ENCODE measurements at regions of chr17 and their contacts with region 1.

Region 1: GRCh38 chr17:44044067-44044466 is 22.4 kb downstream of the LSM12 start:
- DNase-seq: no peak
- ATAC-seq: no peak
- H3K4me3 Mint-ChIP-seq: no peak overlapping the region
- H3K27ac Mint-ChIP-seq: no peak overlapping the region
- H3K4me1 Mint-ChIP-seq: peaks cover 6% of the 10 kb centered on the region
- H3K27me3 Mint-ChIP-seq: no peaks in the 10 kb centered on the region
- CTCF ChIP-seq: no peak

Region 2: DNA sequence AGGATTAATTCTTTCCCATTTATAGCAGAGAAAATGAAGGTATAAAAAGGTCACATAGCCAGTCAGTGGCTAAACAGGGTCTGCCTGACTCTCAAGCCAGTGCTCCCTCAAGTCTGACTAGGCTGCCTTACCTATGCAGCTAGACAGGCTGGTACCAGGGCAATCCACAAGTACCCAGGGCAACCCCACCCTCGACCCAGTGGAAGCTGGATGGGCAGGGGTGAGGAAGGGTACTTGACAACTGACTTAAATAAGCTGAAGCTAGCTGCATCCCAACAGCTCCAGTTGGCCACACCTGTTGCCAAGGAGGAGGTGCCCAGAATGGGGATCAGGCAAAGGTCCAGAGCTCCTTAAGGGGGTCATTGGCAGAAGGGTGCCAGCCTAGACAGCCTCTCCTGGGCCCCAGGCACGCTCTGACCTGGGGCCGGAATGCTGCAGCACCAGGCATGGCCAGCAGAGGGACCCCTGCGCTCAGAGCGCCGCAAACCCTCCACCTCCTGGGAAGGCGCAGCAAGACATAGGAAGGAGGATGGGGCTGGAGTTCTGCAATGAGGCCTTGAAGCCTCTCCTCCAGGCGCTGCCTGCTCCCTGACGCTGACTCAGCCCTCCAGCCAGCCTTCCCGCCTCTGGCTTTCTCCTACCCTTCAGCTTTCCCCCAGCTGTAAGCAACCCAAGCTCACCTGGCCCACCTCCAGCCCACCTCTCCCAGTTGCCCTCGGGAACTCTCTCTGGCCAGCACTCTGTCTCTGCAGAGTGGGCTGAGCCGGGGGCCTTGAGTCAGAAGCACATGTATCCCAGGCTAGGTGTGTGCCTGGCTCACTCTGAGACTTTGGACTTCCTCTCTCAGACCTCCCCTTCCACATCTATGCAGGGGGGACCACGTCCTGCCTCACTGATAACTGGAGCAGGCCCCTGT is 165.5 kb before region 1 on chr17:
- CTCF ChIA-PET with region 1: interaction called, 3 read pairs
- POLR2A ChIA-PET with region 1: no interaction called
- intact Hi-C with region 1: loop called (anchors 2 kb)
- DNase-seq: peak; percentile 73
- ATAC-seq: peak; percentile 95
- H3K4me3 Mint-ChIP-seq: no peak overlapping the region
- H3K27ac Mint-ChIP-seq: no peak overlapping the region
- H3K4me1 Mint-ChIP-seq: no peaks in the 10 kb centered on the region
- H3K27me3 Mint-ChIP-seq: peaks cover 28% of the 10 kb centered on the region
- CTCF ChIP-seq: peak; percentile 70

Region 3: DNA sequence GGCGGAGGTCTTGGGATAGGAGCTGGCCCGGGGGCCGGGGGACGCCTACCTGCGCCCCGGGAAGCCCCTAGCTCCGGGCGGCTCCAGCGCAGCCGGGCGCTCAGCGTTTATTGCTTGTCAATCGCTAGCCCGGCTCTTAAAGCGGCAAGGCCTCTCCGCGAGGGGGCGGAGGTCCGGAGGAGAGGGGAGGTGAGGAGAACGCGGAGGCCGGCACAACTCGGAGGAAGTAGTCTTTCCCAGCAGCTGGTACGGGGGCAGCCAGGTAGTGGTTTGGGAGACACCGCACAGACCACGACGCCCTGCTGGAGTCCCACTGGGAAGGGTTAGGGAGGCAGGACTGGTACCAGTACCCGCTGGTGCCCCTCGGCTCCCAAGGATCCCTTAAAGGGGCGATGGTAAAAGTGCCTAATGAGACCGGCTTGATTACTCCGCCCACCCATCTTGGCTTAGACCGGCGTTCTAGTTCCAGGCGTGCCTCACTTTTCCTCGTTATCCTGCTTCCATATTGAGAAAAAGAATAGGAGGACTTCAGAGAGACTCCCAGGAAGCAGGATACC is 136.6 kb before region 1 on chr17 and contains the start of gene MPP2:
- CTCF ChIA-PET with region 1: interaction called, 7 read pairs
- POLR2A ChIA-PET with region 1: no interaction called
- intact Hi-C with region 1: loop called (anchors 1 kb)
- DNase-seq: peak; percentile 42
- ATAC-seq: peak; percentile 63
- H3K4me3 Mint-ChIP-seq: peak within 1 kb of the TSS; percentile 73
- H3K27ac Mint-ChIP-seq: peak within 1 kb of the TSS; percentile 35
- H3K4me1 Mint-ChIP-seq: peaks cover 23% of the 10 kb centered on the region
- H3K27me3 Mint-ChIP-seq: peaks cover 50% of the 10 kb centered on the region
- CTCF ChIP-seq: no peak
- total RNA-seq, gene MPP2: not detected in 2 replicates

Region 4: GRCh38 chr17:44117351-44117750 is 73.3 kb after region 1 on chr17:
- CTCF ChIA-PET with region 1: no interaction called
- POLR2A ChIA-PET with region 1: no interaction called
- intact Hi-C with region 1: no loop called
- DNase-seq: no peak
- ATAC-seq: no peak
- H3K4me3 Mint-ChIP-seq: no peak overlapping the region
- H3K27ac Mint-ChIP-seq: no peak overlapping the region
- H3K4me1 Mint-ChIP-seq: peaks cover 63% of the 10 kb centered on the region
- H3K27me3 Mint-ChIP-seq: no peaks in the 10 kb centered on the region
- CTCF ChIP-seq: no peak

Region 5: DNA sequence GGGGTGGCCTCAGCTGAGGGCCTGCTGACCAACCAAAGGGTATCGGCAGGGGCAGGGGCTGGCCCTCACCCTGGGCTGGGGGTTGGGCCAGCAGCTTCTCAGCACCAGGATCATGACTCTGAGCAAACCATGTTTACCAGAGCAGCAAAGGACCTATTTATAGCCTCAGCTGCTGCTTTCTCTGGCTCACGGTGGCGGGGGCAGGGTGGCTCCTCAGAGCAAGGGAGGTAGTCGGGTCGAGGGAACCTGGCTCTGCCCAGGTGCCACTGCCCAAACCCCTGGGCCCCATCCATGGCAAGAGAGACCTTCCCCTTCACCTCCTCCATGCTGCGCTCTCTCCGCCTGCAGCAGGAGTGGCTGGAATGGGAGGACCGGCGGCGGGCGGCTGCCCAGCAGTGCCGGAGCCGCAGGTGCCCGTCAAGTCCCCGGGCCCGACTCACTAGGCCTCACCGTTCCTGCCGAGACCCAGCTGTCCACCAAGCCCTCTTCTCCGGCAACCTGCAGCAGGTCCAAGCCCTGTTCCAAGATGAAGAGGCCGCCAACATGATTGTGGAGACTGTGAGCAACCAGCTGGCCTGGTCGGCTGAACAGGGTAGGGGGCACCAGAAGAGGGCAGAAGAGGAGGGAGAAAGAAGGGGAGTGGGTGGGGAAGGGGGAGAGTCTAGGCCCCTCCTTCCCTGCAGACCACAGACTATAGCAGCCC is 126.6 kb after region 1 on chr17 and contains the start of gene ASB16:
- CTCF ChIA-PET with region 1: interaction called, 7 read pairs
- POLR2A ChIA-PET with region 1: no interaction called
- intact Hi-C with region 1: loop called (anchors 5 kb)
- DNase-seq: no peak
- ATAC-seq: no peak
- H3K4me3 Mint-ChIP-seq: no peak within 1 kb of the TSS
- H3K27ac Mint-ChIP-seq: no peak within 1 kb of the TSS
- H3K4me1 Mint-ChIP-seq: peaks cover 9% of the 10 kb centered on the region
- H3K27me3 Mint-ChIP-seq: no peaks in the 10 kb centered on the region
- CTCF ChIP-seq: no peak
- total RNA-seq, gene ASB16: not detected in 2 replicates

Region 6: GRCh38 chr17:44350733-44351226 is 306.7 kb after region 1 on chr17:
- CTCF ChIA-PET with region 1: no interaction called
- POLR2A ChIA-PET with region 1: no interaction called
- intact Hi-C with region 1: no loop called
- DNase-seq: peak; percentile 71
- ATAC-seq: peak; percentile 42
- H3K4me3 Mint-ChIP-seq: no peak overlapping the region
- H3K27ac Mint-ChIP-seq: peak overlapping the region; percentile 65
- H3K4me1 Mint-ChIP-seq: peaks cover 54% of the 10 kb centered on the region
- H3K27me3 Mint-ChIP-seq: no peaks in the 10 kb centered on the region
- CTCF ChIP-seq: no peak